ENCODE measurements at regions of chr20 and their contacts with region 1.

Region 1: DNA sequence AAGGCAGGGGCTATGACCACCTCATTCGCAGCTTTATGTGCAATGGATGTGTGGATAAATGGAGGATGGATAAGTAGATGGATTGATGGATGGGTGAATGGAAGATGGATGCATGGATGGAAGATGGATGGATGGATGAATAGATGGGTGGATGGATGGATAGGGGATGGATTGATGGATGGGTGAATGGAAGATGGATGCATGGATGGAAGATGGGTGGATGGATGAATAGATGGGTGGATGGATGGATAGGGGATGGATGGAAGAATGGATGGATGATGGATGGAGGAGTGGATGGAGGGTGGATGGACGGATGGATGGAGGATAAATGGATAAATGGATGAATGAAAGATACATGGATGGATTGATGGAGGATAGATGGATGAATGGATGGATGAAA is 3.0 kb upstream of the NFATC2 start:
- DNase-seq: no peak
- H3K4me3 ChIP-seq: no peak overlapping the region
- H3K27ac ChIP-seq: no peak overlapping the region
- H3K4me1 ChIP-seq: peaks cover 0 to 29% (median 21%) of the 10 kb centered on the region in 4 donors
- H3K27me3 ChIP-seq: peaks cover 0 to 19% of the 10 kb centered on the region in 2 donors
- CTCF ChIP-seq: no peak

Region 2: GRCh38 chr20:51562332-51563155 is 17.1 kb after region 1 on chr20:
- intact Hi-C with region 1: loop called (anchors 2 kb)
- DNase-seq: peak; percentile 87 to 91
- H3K4me3 ChIP-seq: peak overlapping the region; percentile 49 to 61
- H3K27ac ChIP-seq: peak overlapping the region; percentile 79 to 92
- H3K4me1 ChIP-seq: peaks cover 0 to 55% (median 38%) of the 10 kb centered on the region in 4 donors
- H3K27me3 ChIP-seq: no peaks in the 10 kb centered on the region
- CTCF ChIP-seq: no peak